Prostate gland (tissue), 2 donors: ENCODE measurements at regions of chr17 and their contacts with region 1.

Region 1: GRCh38 chr17:54063639-54064038 is 240.9 kb downstream of the KIF2B start:
- DNase-seq: no peak
- H3K4me3 ChIP-seq: no peak overlapping the region
- H3K27ac ChIP-seq: no peak overlapping the region
- H3K4me1 ChIP-seq: no peaks in the 10 kb centered on the region
- H3K27me3 ChIP-seq: no peaks in the 10 kb centered on the region
- CTCF ChIP-seq: no peak
- POLR2A ChIP-seq: no peak

Region 2: DNA sequence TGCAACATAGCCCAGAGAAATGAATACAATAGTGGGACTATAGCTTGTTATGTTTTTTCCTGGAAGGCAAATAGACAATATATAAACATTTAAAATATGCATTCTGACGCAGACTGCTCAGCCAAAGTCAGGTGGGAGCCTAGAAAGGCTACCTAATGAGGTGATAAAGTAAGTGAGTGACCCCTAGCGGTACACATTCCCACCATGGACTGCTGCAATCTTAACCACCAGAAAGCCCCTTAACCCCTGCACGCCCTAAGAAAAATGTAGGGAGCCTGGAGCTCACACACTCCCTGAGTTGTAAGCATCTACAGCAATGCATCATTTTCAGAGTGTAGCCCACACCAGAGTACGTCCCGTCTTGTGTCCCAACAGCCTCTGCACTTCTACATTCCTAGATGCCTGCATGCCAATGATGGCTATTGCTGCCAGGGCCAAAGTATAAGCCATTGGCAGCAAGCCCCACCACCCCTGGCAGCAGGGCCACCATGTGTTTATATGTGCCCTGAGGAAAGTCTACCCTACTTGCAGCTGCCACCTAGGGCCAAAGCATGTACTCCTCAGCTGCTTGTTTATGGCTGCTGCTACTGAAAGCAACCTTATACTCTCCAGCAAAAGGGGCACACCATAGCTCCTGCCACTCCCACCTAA is 113.3 kb before region 1 on chr17:
- intact Hi-C with region 1: no loop called
- DNase-seq: no peak
- H3K4me3 ChIP-seq: no peak overlapping the region
- H3K27ac ChIP-seq: no peak overlapping the region
- H3K4me1 ChIP-seq: no peaks in the 10 kb centered on the region
- H3K27me3 ChIP-seq: no peaks in the 10 kb centered on the region
- CTCF ChIP-seq: no peak
- POLR2A ChIP-seq: no peak

Region 3: GRCh38 chr17:54013072-54013471 is 50.6 kb before region 1 on chr17:
- intact Hi-C with region 1: loop called (anchors 10 kb)
- DNase-seq: no peak
- H3K4me3 ChIP-seq: no peak overlapping the region
- H3K27ac ChIP-seq: no peak overlapping the region
- H3K4me1 ChIP-seq: no peaks in the 10 kb centered on the region
- H3K27me3 ChIP-seq: no peaks in the 10 kb centered on the region
- CTCF ChIP-seq: no peak
- POLR2A ChIP-seq: no peak